Endothelial cell of umbilical vein (primary cell): ENCODE measurements at regions of chr5 and their contacts with region 1.

Region 1: DNA sequence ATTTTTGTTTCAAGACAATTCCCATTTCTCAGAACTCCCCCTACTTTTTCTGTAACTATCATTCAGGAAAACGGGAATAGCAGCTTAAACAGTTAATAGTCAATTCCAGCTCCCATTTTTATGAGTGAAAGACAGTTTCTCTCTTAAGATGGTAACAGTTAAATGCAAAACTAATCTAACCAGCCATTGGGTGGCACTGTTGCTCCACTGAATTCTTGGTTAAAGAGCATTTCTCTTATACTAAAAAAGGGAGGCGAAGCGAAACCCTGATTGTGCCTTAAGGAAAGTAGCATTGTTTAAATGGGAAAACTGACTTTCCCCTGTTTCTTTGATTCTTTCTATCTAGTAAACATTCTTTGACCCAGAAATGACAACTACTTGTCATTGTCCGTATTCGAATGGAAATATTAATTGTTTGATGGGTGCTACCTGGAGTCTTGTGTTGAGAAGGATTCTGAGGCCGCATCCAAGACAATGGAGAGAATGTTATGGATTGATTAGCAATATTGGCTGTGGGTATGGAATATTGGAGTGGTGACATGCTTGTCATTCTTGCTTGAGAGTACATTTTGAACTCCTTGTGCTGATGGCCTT is 507.8 kb downstream of the MAT2B start:
- DNase-seq: peak; percentile 88
- H3K4me3 ChIP-seq: no peak overlapping the region
- H3K27ac ChIP-seq: peak overlapping the region; percentile 47
- H3K4me1 ChIP-seq: peaks cover 11% of the 10 kb centered on the region
- H3K27me3 ChIP-seq: no peaks in the 10 kb centered on the region
- CTCF ChIP-seq: peak; percentile 45 to 59
- POLR2A ChIP-seq: no peak

Region 2: GRCh38 chr5:163595932-163596607 is 417.1 kb before region 1 on chr5:
- CTCF ChIA-PET with region 1: no interaction called
- POLR2A ChIA-PET with region 1: no interaction called
- dilution Hi-C with region 1: no loop called
- intact Hi-C with region 1: no loop called
- DNase-seq: no peak
- H3K4me3 ChIP-seq: no peak overlapping the region
- H3K27ac ChIP-seq: no peak overlapping the region
- H3K4me1 ChIP-seq: no peaks in the 10 kb centered on the region
- H3K27me3 ChIP-seq: no peaks in the 10 kb centered on the region
- CTCF ChIP-seq: no peak
- POLR2A ChIP-seq: no peak

Region 3: GRCh38 chr5:163718272-163718671 is 294.9 kb before region 1 on chr5:
- CTCF ChIA-PET with region 1: no interaction called
- POLR2A ChIA-PET with region 1: no interaction called
- dilution Hi-C with region 1: no loop called
- intact Hi-C with region 1: no loop called
- DNase-seq: no peak
- H3K4me3 ChIP-seq: no peak overlapping the region
- H3K27ac ChIP-seq: no peak overlapping the region
- H3K4me1 ChIP-seq: no peaks in the 10 kb centered on the region
- H3K27me3 ChIP-seq: no peaks in the 10 kb centered on the region
- CTCF ChIP-seq: no peak
- POLR2A ChIP-seq: no peak

Region 4: GRCh38 chr5:163867324-163867723 is 145.8 kb before region 1 on chr5:
- CTCF ChIA-PET with region 1: interaction called, 5 read pairs
- POLR2A ChIA-PET with region 1: no interaction called
- dilution Hi-C with region 1: no loop called
- intact Hi-C with region 1: loop called (anchors 1 kb)
- DNase-seq: peak; percentile 76
- H3K4me3 ChIP-seq: no peak overlapping the region
- H3K27ac ChIP-seq: peak overlapping the region; percentile 99
- H3K4me1 ChIP-seq: peaks cover 55% of the 10 kb centered on the region
- H3K27me3 ChIP-seq: no peaks in the 10 kb centered on the region
- CTCF ChIP-seq: no peak
- POLR2A ChIP-seq: peak; percentile 26

Region 5: GRCh38 chr5:164027738-164028137 is 14.6 kb after region 1 on chr5:
- CTCF ChIA-PET with region 1: interaction called, 10 read pairs
- POLR2A ChIA-PET with region 1: no interaction called
- dilution Hi-C with region 1: no loop called
- intact Hi-C with region 1: no loop called
- DNase-seq: peak; percentile 41
- H3K4me3 ChIP-seq: no peak overlapping the region
- H3K27ac ChIP-seq: no peak overlapping the region
- H3K4me1 ChIP-seq: peaks cover 6% of the 10 kb centered on the region
- H3K27me3 ChIP-seq: no peaks in the 10 kb centered on the region
- CTCF ChIP-seq: no peak
- POLR2A ChIP-seq: no peak

Region 6: DNA sequence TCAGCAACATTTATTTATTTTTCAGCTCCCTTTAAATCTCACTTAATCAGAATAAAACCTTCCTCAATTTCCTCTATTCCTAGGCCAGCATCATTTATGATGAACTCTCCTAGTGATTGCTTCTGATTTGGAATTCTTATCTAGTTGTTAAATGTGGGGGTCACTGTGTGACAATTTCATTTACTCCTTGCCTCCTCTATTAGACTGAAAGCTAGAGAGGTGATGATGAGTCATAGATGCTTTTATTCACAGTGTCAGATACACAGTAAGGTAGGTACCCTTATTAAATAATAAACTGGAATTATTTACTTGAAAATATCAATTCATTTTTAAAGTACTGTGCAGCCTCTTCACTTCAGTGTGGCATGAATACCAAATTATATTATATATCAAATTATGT is 452.9 kb after region 1 on chr5:
- CTCF ChIA-PET with region 1: interaction called, 10 read pairs
- POLR2A ChIA-PET with region 1: no interaction called
- dilution Hi-C with region 1: no loop called
- intact Hi-C with region 1: no loop called
- DNase-seq: no peak
- H3K4me3 ChIP-seq: no peak overlapping the region
- H3K27ac ChIP-seq: no peak overlapping the region
- H3K4me1 ChIP-seq: no peaks in the 10 kb centered on the region
- H3K27me3 ChIP-seq: no peaks in the 10 kb centered on the region
- CTCF ChIP-seq: no peak
- POLR2A ChIP-seq: no peak

Region 7: GRCh38 chr5:165735388-165735787 is 1722.2 kb after region 1 on chr5:
- CTCF ChIA-PET with region 1: no interaction called
- POLR2A ChIA-PET with region 1: no interaction called
- dilution Hi-C with region 1: no loop called
- intact Hi-C with region 1: no loop called
- DNase-seq: no peak
- H3K4me3 ChIP-seq: no peak overlapping the region
- H3K27ac ChIP-seq: no peak overlapping the region
- H3K4me1 ChIP-seq: no peaks in the 10 kb centered on the region
- H3K27me3 ChIP-seq: no peaks in the 10 kb centered on the region
- CTCF ChIP-seq: no peak
- POLR2A ChIP-seq: no peak